HEK293 (cell line): ENCODE measurements at regions of chr2 and their contacts with region 1.

Region 1: GRCh38 chr2:1769703-1770422 is 25.5 kb upstream of the PXDN start:
- H3K4me3 ChIP-seq: no peak overlapping the region
- H3K27ac ChIP-seq: no peak overlapping the region
- H3K4me1 ChIP-seq: no peaks in the 10 kb centered on the region
- CTCF ChIP-seq: peak; percentile 69

Region 2: DNA sequence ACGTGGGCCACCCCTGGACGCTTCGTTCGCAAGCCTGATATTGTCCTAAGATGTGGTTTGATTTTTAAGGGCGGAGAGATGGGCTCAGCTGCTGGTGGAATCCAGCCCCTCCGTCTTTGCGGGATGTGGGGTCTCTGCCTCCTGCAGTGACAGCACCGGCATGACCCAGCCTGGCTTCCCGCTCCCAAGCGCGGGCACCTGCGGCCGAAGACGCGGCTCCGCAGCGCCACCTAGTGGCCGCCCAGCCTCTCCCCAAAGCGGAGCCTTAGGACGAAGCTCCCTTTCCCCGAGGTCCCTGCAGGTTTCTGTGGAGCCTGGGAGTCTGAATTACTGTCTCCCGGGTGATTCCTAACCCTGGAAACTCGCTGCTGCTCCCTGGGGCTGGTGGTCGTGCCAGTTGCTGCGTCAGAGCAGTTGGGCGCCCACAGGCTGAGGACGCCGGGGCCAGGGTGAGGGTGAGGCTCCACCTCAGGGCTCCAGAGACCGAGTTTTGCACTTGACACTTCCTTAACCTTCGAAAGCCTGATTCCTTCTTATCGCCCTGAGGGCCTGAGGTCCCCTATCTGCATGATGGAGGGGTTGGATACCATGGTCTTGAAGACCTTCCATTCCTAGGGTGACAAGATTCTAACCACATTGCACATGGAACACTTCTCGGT is 219.1 kb before region 1 on chr2:
- CTCF ChIA-PET with region 1: interaction called, 61 read pairs
- POLR2A ChIA-PET with region 1: no interaction called
- H3K4me3 ChIP-seq: no peak overlapping the region
- H3K27ac ChIP-seq: no peak overlapping the region
- H3K4me1 ChIP-seq: no peaks in the 10 kb centered on the region
- CTCF ChIP-seq: peak; percentile 81

Region 3: DNA sequence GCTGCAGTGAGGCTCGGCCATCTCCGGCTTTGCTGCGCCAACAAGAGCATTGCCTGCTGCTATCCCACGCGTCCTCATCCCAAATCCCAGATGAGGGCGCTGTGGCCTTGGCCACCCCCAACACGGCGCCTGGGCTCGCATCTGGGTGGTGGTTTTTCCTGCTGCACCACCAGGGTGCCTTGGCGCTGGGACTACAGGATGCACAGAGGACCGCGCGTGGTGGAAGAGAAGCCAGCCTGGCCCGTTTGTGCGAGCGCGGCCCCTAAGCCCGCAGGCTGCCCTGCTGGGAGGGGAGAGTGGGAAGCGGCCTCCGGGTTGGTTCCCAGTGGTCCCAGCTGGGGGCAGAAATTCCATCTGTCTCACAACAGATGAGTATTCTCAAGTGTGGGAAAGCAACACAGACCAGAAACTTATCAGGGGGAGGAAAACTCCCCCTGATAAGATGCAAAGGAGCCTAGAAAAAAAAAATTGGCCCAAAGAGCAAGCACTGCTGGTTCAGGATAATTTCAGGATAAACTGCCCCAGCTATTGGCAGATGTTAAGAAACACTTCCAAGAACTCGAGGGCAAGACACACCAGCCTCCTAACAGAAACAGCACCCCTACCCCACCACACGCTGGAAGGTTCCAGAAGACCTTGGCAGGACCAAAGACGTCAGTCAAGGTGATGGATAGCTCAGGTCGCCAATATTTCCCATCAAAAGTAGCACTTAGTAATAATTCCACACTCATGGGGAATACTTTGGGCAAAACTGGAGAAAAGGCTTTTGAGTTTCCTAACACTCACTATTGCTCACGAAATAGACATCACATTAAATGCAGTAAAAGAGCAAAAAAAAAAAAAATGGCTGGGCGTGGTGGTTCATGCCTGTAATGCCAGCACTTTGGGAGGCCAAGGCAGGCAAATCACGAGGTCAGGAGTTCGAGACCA is 177.6 kb before region 1 on chr2:
- CTCF ChIA-PET with region 1: interaction called, 10 read pairs
- POLR2A ChIA-PET with region 1: no interaction called
- H3K4me3 ChIP-seq: no peak overlapping the region
- H3K27ac ChIP-seq: no peak overlapping the region
- H3K4me1 ChIP-seq: no peaks in the 10 kb centered on the region
- CTCF ChIP-seq: no peak

Region 4: GRCh38 chr2:1750933-1751766 is 18.7 kb before region 1 on chr2:
- CTCF ChIA-PET with region 1: interaction called, 11 read pairs
- POLR2A ChIA-PET with region 1: no interaction called
- H3K4me3 ChIP-seq: no peak overlapping the region
- H3K27ac ChIP-seq: no peak overlapping the region
- H3K4me1 ChIP-seq: no peaks in the 10 kb centered on the region; the same call in 1 of the 2 replicates
- CTCF ChIP-seq: peak; percentile 79

Region 5: GRCh38 chr2:1758774-1759610 is 10.9 kb before region 1 on chr2:
- CTCF ChIA-PET with region 1: interaction called, 13 read pairs
- POLR2A ChIA-PET with region 1: no interaction called
- H3K4me3 ChIP-seq: no peak overlapping the region
- H3K27ac ChIP-seq: no peak overlapping the region
- H3K4me1 ChIP-seq: no peaks in the 10 kb centered on the region
- CTCF ChIP-seq: no peak

Region 6: DNA sequence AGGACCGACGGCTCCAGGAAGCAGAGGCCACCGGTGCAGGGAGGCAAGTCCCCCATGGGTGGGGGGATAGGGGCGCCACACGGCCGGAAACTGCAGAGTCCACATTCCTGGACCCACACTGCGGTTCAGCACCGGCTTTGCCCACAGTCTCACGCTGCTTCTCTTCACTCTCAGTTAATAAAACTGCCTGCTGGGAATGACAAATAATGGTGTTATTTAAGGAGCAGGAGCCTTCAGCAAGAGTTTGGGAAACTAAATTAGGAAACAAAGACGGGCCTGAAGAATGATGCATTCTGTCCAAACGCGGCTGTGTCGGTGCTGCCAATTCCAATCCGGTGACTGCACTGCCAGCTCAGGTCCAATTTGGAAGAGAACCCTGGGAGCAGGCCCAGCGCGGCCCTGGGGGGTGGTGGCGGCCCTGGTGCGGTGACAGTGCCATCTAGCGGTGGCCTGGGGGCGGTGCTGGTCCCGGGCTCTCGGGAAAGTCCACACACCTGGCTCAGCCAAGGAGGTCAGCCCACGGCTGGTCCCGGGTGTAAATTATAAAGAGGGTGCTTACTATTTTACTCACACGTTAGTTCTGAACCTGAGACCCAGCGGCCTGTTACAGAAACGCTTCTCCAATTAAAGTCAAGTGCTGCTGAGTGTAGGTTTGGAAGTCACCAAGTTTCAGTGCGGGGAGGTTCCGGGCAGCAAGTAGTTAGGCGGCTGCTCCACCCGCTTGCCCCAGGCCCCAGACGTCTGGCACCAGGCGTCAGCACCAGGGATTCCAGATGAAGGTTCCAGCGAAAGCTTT is 47.6 kb after region 1 on chr2:
- CTCF ChIA-PET with region 1: interaction called, 12 read pairs
- POLR2A ChIA-PET with region 1: no interaction called
- H3K4me3 ChIP-seq: no peak overlapping the region
- H3K27ac ChIP-seq: no peak overlapping the region
- H3K4me1 ChIP-seq: no peaks in the 10 kb centered on the region
- CTCF ChIP-seq: peak; percentile 83